ENCODE measurements at regions of chr4 and their contacts with region 1.

Region 1: DNA sequence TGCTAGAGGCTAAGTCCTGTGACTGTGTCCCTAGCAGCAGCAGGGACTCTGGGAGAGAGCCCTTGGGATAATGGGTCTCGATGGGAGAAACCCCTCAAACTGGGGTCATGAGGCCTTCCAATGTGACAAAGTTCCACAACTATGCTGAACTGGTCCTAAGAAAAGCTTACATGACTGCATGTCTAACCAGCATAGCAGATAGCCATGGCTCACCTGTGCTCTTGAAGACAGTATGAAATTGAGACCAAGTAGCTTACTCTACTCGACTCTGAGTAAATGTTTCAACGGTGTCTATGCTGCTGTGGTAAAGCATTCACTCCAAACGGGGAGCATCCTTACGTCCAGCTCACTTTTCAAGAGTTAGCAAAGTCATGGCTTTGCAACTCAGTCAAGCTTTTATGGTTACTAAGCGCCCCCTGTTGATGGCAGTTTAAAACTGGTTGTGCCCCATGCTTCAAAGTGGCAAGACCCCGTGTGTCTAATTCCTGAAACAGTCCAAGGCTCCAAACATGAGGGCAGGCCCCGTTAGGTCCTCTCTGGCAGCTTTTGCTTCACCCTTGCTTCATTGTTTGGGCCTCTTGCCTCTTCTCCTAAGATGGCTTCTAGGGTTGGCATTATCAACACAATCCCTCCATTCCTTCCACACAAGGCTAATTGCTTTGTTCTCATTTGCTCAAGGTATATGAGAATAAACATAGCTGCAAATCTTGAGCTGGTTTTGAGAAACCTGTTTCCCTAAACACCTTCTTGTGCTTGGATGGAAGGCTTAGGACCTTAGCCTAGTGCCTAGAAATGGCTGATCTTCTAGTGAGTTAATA is 46.6 kb downstream of the CCNG2 start:
- DNase-seq: peak; percentile 79
- H3K4me3 ChIP-seq: no peak overlapping the region
- H3K27ac ChIP-seq: no peak overlapping the region
- H3K4me1 ChIP-seq: peaks cover 3% of the 10 kb centered on the region
- H3K27me3 ChIP-seq: no peaks in the 10 kb centered on the region
- CTCF ChIP-seq: peak; percentile 71

Region 2: GRCh38 chr4:77052352-77052751 is 151.2 kb before region 1 on chr4:
- intact Hi-C with region 1: loop called (anchors 5 kb)
- DNase-seq: peak; percentile 79
- H3K4me3 ChIP-seq: no peak overlapping the region
- H3K27ac ChIP-seq: no peak overlapping the region
- H3K4me1 ChIP-seq: no peaks in the 10 kb centered on the region
- H3K27me3 ChIP-seq: no peaks in the 10 kb centered on the region
- CTCF ChIP-seq: peak; percentile 37

Region 3: GRCh38 chr4:77095101-77095821 is 108.3 kb before region 1 on chr4:
- intact Hi-C with region 1: loop called (anchors 1 kb)
- DNase-seq: peak; percentile 82
- H3K4me3 ChIP-seq: no peak overlapping the region
- H3K27ac ChIP-seq: no peak overlapping the region
- H3K4me1 ChIP-seq: no peaks in the 10 kb centered on the region
- H3K27me3 ChIP-seq: no peaks in the 10 kb centered on the region
- CTCF ChIP-seq: peak; percentile 86

Measured in colonic mucosa (tissue), 4 donors.